Activated T-helper 2 cell treated with anti-CD3 and anti-CD28 coated beads, Interferon-gamma antibody, Interleukin-2, Interleukin-4, amounts not matched to agents 10 μg/mL and 5 μg/mL and 100 μg/mL, durations not matched to agents 14 hours and 24 hours and 36 hours (primary cell): ENCODE measurements at regions of chr16 and their contacts with region 1.

Region 1: GRCh38 chr16:75198135-75198600 is 8.8 kb downstream of the CTRB2 start:
- DNase-seq: no peak
- H3K4me3 Mint-ChIP-seq: no peak overlapping the region
- H3K27ac Mint-ChIP-seq: no peak overlapping the region
- H3K4me1 Mint-ChIP-seq: peaks cover 1% of the 10 kb centered on the region
- H3K27me3 Mint-ChIP-seq: peaks cover 29% of the 10 kb centered on the region

Region 2: DNA sequence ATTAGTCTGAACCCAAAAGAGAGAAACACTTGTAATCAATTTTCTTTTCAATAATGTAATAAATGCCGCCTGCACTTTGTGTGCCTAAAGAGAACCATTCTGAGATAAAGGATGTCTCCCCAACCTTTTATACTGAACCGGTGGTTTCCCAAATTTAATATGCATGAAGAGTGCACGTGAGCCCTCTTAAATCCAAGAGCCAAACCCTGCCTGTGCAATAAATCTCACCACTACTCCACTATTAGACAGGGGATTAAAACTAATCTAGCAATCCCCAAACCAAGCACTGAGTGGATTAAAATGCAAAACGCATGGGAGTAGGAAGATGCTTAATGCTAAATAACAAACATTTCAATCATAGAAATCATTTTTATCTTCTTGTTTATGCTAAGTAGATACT is 1252.5 kb before region 1 on chr16:
- intact Hi-C with region 1: no loop called
- DNase-seq: no peak
- H3K4me3 Mint-ChIP-seq: no peak overlapping the region
- H3K27ac Mint-ChIP-seq: no peak overlapping the region
- H3K4me1 Mint-ChIP-seq: no peaks in the 10 kb centered on the region
- H3K27me3 Mint-ChIP-seq: no peaks in the 10 kb centered on the region

Region 3: DNA sequence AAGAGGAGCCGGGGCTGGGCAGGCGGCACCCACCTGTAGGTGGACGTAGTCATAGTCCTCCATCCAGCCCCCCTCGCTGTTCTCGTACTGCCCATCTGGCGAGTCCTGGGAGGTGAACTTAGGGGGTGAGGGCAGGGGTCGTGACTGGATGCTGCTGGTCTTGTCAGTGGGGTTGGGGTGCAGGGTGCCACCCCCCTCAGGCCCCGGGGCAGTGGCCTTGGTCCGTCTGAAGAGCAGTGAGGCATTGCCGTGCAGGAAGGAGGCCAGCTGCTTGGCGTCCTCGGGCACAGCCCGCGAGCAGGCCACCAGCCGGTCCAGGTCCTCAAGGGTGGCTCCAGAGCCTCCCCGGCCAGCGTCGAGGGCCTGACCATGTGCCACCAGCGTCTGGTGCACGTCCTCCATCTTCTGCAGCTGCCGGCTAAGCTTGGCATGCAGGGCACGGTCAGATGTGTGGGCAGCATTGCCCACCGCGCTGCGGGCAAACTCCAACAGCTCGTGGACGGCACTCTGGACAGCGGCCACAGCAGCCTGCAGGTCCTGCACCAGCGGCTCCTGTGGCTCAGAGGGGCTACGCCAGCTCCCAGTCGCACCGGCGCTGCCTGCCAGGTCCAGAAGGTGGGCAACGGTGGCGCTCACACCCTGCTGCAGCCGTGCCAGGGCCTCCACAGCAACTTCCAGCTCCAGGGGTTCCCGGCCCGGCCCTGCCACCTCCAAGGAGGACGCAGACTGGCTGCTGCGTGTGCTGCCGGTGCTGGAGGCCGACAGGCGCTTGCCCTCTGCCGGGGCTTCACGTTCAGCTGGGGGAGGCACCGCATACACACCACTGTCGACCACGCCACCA is 36.9 kb after region 1 on chr16:
- intact Hi-C with region 1: loop called (anchors 5 kb)
- DNase-seq: no peak
- H3K4me3 Mint-ChIP-seq: no peak overlapping the region
- H3K27ac Mint-ChIP-seq: no peak overlapping the region
- H3K4me1 Mint-ChIP-seq: no peaks in the 10 kb centered on the region
- H3K27me3 Mint-ChIP-seq: peaks cover 2% of the 10 kb centered on the region

Region 4: GRCh38 chr16:75385507-75386152 is 187.5 kb after region 1 on chr16:
- intact Hi-C with region 1: loop called (anchors 1 kb)
- DNase-seq: no peak
- H3K4me3 Mint-ChIP-seq: no peak overlapping the region
- H3K27ac Mint-ChIP-seq: no peak overlapping the region
- H3K4me1 Mint-ChIP-seq: peaks cover 6% of the 10 kb centered on the region
- H3K27me3 Mint-ChIP-seq: peaks cover 22% of the 10 kb centered on the region

Region 5: DNA sequence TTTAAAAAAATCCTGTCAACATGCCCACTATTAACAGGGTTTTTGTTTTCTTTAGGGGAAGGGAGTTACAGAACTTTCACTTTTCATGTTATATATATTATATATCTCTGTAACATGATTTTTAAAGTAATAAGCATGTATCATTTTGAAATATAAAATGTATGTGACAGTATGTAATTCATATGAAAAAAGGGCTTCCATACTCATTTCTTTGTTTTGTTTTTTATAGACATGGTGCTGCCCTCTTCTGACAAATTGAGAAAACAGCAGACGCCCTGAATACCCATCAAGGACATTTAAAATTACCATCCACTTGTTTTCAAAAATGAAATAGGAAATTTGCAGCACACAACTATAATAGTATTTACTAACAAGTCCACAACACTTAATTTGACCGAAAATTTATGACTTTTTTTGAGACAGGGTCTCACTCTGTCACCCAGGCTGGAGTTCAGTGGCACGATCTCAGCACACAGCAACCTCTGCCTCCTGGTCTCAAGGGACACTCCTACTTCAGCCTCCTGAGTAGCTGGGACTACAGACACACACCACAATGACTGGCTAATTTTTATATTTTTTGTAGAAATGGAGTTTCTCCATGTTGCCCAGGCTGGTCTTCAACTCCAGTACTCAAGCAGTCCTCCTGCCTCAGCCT is 204.8 kb after region 1 on chr16:
- intact Hi-C with region 1: loop called (anchors 1 kb)
- DNase-seq: no peak
- H3K4me3 Mint-ChIP-seq: no peak overlapping the region
- H3K27ac Mint-ChIP-seq: no peak overlapping the region
- H3K4me1 Mint-ChIP-seq: peaks cover 9% of the 10 kb centered on the region
- H3K27me3 Mint-ChIP-seq: no peaks in the 10 kb centered on the region

Region 6: GRCh38 chr16:75464130-75464918 is 266.2 kb after region 1 on chr16 and contains the start of gene TMEM170A:
- intact Hi-C with region 1: loop called (anchors 5 kb)
- DNase-seq: peak; percentile 98
- H3K4me3 Mint-ChIP-seq: peak within 1 kb of the TSS; percentile 91
- H3K27ac Mint-ChIP-seq: peak within 1 kb of the TSS; percentile 89
- H3K4me1 Mint-ChIP-seq: peaks cover 36% of the 10 kb centered on the region
- H3K27me3 Mint-ChIP-seq: peaks cover 2% of the 10 kb centered on the region
- total RNA-seq, gene TMEM170A: 35.6 and 39.9 TPM in 2 replicates